Endothelial cell of umbilical vein (primary cell): ENCODE measurements at regions of chrX and their contacts with region 1.

Region 1: GRCh38 chrX:29662759-29663503 is 552.4 kb upstream of the MAGEB2 start:
- DNase-seq: peak; percentile 92
- H3K4me3 ChIP-seq: no peak overlapping the region
- H3K27ac ChIP-seq: peak overlapping the region; percentile 79
- H3K4me1 ChIP-seq: peaks cover 23% of the 10 kb centered on the region
- H3K27me3 ChIP-seq: no peaks in the 10 kb centered on the region
- CTCF ChIP-seq: no peak
- POLR2A ChIP-seq: no peak

Region 2: GRCh38 chrX:29318012-29318411 is 344.9 kb before region 1 on chrX:
- CTCF ChIA-PET with region 1: no interaction called
- POLR2A ChIA-PET with region 1: no interaction called
- dilution Hi-C with region 1: no loop called
- intact Hi-C with region 1: loop called (anchors 5 kb)
- DNase-seq: peak; percentile 76
- H3K4me3 ChIP-seq: no peak overlapping the region
- H3K27ac ChIP-seq: no peak overlapping the region
- H3K4me1 ChIP-seq: peaks cover 19% of the 10 kb centered on the region
- H3K27me3 ChIP-seq: no peaks in the 10 kb centered on the region
- CTCF ChIP-seq: no peak
- POLR2A ChIP-seq: no peak

Region 3: DNA sequence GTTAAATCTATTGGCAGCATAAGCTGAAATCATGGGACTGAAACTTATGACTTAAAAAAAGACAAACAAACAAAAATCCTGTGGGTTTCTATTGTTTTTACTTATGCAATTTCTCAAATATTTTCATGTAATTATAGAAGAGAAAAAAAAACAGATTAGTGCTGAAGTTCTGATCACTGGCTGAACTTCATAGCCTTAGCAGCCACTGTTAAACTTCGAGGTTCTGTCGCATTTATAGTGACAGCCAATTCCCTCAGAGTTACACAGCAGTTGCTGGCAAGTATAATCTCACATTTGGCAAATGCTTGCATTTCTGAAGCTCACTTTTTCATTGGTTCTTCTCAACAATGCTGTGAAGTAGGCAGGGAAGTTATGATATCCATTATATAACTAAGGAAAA is 196.5 kb before region 1 on chrX:
- CTCF ChIA-PET with region 1: no interaction called
- POLR2A ChIA-PET with region 1: no interaction called
- dilution Hi-C with region 1: no loop called
- intact Hi-C with region 1: no loop called
- DNase-seq: no peak
- H3K4me3 ChIP-seq: no peak overlapping the region
- H3K27ac ChIP-seq: no peak overlapping the region
- H3K4me1 ChIP-seq: no peaks in the 10 kb centered on the region
- H3K27me3 ChIP-seq: no peaks in the 10 kb centered on the region
- CTCF ChIP-seq: no peak
- POLR2A ChIP-seq: no peak

Region 4: GRCh38 chrX:29687687-29688086 is 24.8 kb after region 1 on chrX:
- CTCF ChIA-PET with region 1: no interaction called
- POLR2A ChIA-PET with region 1: no interaction called
- dilution Hi-C with region 1: no loop called
- intact Hi-C with region 1: no loop called
- DNase-seq: peak; percentile 58
- H3K4me3 ChIP-seq: no peak overlapping the region
- H3K27ac ChIP-seq: no peak overlapping the region
- H3K4me1 ChIP-seq: peaks cover 5% of the 10 kb centered on the region
- H3K27me3 ChIP-seq: no peaks in the 10 kb centered on the region
- CTCF ChIP-seq: no peak
- POLR2A ChIP-seq: no peak

Region 5: GRCh38 chrX:29911673-29912072 is 248.7 kb after region 1 on chrX:
- CTCF ChIA-PET with region 1: no interaction called
- POLR2A ChIA-PET with region 1: no interaction called
- dilution Hi-C with region 1: no loop called
- intact Hi-C with region 1: no loop called
- DNase-seq: no peak
- H3K4me3 ChIP-seq: no peak overlapping the region
- H3K27ac ChIP-seq: no peak overlapping the region
- H3K4me1 ChIP-seq: no peaks in the 10 kb centered on the region
- H3K27me3 ChIP-seq: no peaks in the 10 kb centered on the region
- CTCF ChIP-seq: no peak
- POLR2A ChIP-seq: no peak

Region 6: DNA sequence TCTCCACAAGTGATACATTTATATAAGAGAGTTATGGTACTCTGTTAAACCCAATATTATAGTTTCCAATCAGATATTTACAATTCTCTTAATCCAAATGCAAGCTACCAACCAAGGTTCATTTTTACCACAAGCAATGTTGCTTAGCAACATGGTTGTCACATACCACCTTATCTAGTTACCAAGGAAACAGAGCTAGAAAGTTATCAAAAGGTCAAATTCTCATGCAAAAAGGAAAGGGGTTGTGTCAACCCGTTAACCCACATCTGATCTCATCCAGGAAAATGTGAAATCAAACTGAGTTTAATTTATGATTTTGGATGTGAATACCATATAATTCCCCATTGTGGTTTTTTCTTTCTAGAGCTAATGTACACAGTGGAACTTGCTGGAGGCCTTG is 278.4 kb after region 1 on chrX:
- CTCF ChIA-PET with region 1: no interaction called
- POLR2A ChIA-PET with region 1: no interaction called
- dilution Hi-C with region 1: no loop called
- intact Hi-C with region 1: loop called (anchors 1 kb)
- DNase-seq: peak; percentile 79
- H3K4me3 ChIP-seq: no peak overlapping the region
- H3K27ac ChIP-seq: no peak overlapping the region
- H3K4me1 ChIP-seq: peaks cover 3% of the 10 kb centered on the region
- H3K27me3 ChIP-seq: no peaks in the 10 kb centered on the region
- CTCF ChIP-seq: no peak
- POLR2A ChIP-seq: no peak

Region 7: DNA sequence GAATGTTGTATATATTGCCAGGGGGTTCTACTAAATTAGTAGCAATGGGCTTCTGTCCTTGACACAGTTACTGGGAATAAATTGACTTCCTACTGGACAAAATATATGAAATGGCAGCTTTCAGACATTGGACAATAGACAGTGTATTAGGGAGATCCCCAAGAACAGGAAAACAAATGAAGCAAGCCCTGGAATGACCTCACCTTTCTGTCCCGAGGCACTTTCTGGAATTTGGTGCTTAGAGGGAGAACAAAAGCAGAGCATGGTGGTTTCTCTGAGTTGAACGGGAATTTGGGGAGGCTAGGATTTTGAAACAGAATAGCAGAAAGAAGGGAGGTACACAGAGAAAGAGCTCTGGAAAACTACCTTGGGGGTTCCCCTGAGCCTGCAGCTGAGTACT is 364.7 kb after region 1 on chrX:
- CTCF ChIA-PET with region 1: no interaction called
- POLR2A ChIA-PET with region 1: no interaction called
- dilution Hi-C with region 1: no loop called
- intact Hi-C with region 1: no loop called
- DNase-seq: peak; percentile 2
- H3K4me3 ChIP-seq: no peak overlapping the region
- H3K27ac ChIP-seq: no peak overlapping the region
- H3K4me1 ChIP-seq: no peaks in the 10 kb centered on the region
- H3K27me3 ChIP-seq: no peaks in the 10 kb centered on the region
- CTCF ChIP-seq: no peak
- POLR2A ChIP-seq: no peak